MCF 10A (cell line): ENCODE measurements at regions of chr5 and their contacts with region 1.

Region 1: GRCh38 chr5:132103332-132103951 is 29.9 kb downstream of the CSF2 start:
- DNase-seq: peak; percentile 96
- H3K4me3 Mint-ChIP-seq: no peak overlapping the region
- H3K27ac Mint-ChIP-seq: peak overlapping the region; percentile 90
- H3K4me1 Mint-ChIP-seq: peaks cover 28% of the 10 kb centered on the region
- H3K27me3 Mint-ChIP-seq: no peaks in the 10 kb centered on the region
- CTCF ChIP-seq: no peak

Region 2: DNA sequence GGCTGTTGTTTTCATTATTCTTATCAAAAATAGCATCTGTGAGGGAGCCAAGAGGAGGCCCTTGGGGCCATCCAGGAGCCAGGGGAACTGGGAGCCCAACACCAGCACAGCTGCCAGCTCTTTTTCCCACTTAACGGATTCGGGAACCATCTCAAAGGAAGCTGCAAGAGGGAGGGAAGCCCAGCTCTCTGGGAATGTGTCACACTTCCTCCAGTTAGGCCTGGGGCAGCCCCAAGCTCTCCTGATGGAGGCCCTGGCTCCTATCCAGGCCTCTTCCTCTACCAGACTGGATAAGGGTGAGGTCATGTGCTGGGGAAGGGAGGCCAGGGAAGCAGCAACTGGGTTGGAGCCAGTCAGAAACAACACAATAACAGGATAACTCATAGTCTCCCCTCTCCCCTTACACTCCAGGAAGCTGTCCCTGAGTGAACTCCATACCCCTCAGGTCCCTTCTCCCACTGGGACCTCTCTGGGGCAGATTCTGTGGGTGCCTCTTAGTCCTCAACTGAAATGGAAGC is 17.1 kb before region 1 on chr5:
- CTCF ChIA-PET with region 1: interaction called, 3 read pairs
- POLR2A ChIA-PET with region 1: interaction called, 3 read pairs
- intact Hi-C with region 1: loop called (anchors 1 kb)
- DNase-seq: peak; percentile 99
- H3K4me3 Mint-ChIP-seq: no peak overlapping the region
- H3K27ac Mint-ChIP-seq: peak overlapping the region; percentile 20
- H3K4me1 Mint-ChIP-seq: peaks cover 50% of the 10 kb centered on the region
- H3K27me3 Mint-ChIP-seq: no peaks in the 10 kb centered on the region
- CTCF ChIP-seq: no peak

Region 3: DNA sequence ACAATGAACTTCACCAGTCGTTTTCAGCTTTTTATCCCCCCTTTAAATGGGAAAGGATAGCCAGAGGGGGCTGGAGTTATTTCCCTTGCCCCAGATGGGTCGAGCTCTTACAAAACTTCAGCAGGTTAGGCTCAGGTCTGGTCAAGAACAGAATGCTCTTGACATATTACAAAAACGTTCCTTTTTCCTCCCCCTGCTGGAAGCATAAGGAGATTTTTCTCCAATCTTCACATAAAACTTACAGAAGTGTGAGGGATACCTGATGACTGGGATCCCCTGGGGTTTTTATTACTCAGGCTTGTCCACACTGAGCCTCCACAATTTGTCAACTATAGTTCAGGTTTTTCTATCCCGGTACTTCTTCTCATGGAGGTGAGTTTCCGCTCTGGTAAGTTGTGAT is 30.9 kb after region 1 on chr5:
- CTCF ChIA-PET with region 1: interaction called, 4 read pairs
- POLR2A ChIA-PET with region 1: no interaction called
- intact Hi-C with region 1: loop called (anchors 2 kb)
- DNase-seq: peak; percentile 67
- H3K4me3 Mint-ChIP-seq: no peak overlapping the region
- H3K27ac Mint-ChIP-seq: no peak overlapping the region
- H3K4me1 Mint-ChIP-seq: peaks cover 31% of the 10 kb centered on the region
- H3K27me3 Mint-ChIP-seq: no peaks in the 10 kb centered on the region
- CTCF ChIP-seq: peak; percentile 47